Posterior cingulate gyrus (tissue), 11 donors: ENCODE measurements at regions of chr3 and their contacts with region 1.

Region 1: DNA sequence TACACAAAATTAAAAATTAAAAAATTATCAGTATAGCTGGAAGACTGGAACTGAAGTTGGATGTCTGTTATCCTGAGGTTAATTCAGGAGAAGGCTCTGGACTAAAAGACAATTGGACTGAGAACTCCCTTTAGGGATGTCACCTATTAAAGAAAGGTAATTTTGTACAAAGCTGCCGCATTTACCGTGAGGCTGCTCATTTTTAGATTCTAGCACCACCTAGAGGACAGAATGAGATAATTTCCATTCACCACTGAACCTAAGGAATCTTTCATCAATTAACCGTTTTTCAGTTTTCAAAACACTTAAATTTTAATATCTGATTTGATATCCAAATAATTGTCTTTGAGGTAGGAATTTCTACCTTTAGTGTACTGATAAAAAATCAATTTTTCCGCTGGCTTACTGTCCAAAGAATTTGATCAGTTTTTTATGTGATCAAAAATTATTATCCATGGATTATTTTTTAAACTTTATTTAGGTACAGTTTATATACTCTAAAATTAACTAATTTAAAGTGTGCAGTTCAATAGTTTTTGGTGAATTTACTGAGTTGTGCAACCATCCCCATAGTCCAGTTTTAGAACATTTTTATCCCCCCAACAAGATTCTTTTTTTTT is 106.7 kb upstream of the TNIK start:
- DNase-seq: no peak

Region 2: DNA sequence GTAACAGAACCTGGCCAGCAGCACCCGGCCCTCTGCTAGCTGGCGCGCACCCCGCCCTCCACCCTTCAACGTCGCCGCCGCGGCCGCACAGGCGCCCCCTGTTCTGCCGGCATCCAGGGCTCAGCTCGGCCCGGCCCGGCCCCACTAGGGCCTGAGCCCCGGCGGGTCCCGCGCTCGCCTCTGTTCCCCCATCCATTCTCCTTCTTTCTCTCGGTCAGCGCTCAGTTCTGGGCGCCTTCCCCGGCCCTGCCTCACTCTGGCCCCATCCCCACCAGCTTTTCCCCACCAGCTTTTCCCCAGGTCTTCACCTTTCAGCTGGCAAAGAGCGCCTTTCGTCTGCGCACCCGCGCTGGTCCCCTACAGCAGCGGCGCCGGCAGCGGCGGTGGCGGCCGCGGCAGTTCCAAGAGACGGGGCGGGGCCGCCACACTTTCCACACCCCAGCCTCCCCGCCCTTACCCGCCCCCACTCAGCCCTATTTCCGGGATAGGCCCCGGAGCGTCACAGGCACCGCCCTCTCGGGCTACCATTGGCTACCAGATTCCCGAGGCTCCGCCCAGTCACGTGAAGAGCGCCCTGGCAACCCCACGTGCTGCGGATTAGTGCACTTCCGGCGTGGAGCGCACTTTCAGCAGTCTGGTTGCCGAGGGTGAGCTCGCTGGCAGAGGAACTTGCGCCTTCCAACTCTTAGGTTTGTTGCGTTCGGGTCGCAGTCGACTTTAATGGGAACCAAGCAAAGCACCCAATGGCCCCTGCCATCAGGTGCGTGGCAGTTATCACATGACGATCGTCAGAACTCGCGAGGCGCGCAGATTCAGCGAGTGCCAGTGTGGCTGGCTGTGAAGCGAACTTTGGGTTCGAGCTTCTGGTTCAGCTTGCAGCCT is 658.4 kb before region 1 on chr3 and contains the start of gene EIF5A2:
- intact Hi-C with region 1: no loop called
- DNase-seq: peak; percentile 83 to 99 (median 92)

Region 3: GRCh38 chr3:170961616-170962400 is 605.1 kb before region 1 on chr3:
- intact Hi-C with region 1: loop called (anchors 1 kb)
- DNase-seq: peak in 4 of 10 donors; percentile 10 to 77 (median 36)

Region 4: DNA sequence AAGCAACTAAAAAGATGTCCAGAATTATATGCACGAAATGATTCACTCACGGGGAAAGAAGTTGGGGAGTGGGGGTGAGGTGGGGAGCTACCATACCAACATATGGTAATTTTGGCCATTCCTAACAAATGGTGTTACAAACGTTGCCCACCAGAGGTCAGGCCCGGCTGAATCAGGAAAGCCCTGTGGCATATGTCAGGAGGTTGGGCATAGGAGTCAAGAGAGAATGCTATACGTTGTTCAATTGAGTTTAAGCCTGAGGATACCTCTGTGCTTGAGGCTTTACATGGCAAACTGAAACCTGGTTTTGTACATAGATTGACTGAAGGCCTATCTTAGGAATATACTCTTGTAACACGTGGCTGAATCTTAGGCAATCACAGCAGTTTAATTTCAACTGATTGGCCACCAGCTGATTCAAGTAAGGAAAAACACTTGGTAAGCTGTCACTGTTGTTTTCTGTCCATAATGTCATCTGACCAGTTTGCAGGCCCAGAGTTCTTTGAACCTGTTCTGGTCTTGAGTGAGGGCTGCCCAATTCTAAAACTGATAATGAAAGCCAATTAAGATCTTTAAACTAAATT is 517.0 kb before region 1 on chr3:
- intact Hi-C with region 1: loop called (anchors 5 kb)
- DNase-seq: peak in 7 of 10 donors; percentile 25 to 92 (median 53)

Region 5: GRCh38 chr3:171459942-171460724 is 106.8 kb before region 1 on chr3 and contains the start of gene TNIK:
- intact Hi-C with region 1: loop called (anchors 10 kb)
- DNase-seq: peak; percentile 88 to 99 (median 92)